CD4-positive, alpha-beta T cell (primary cell): ENCODE measurements at regions of chr6 and their contacts with region 1.

Region 1: GRCh38 chr6:26025894-26026832 is 61.1 kb upstream of the HFE start:
- DNase-seq: peak; percentile 75 to 98 (median 88)
- ATAC-seq: peak; percentile 45
- H3K4me3 ChIP-seq: peak overlapping the region; percentile 70
- H3K4me3 Mint-ChIP-seq: peak overlapping the region; percentile 90
- H3K27ac ChIP-seq: peak overlapping the region; percentile 86 to 88
- H3K27ac Mint-ChIP-seq: peak overlapping the region; percentile 97
- H3K4me1 ChIP-seq: peaks cover 34% of the 10 kb centered on the region
- H3K4me1 Mint-ChIP-seq: peaks cover 42% of the 10 kb centered on the region
- H3K27me3 ChIP-seq: no peaks in the 10 kb centered on the region
- H3K27me3 Mint-ChIP-seq: no peaks in the 10 kb centered on the region
- CTCF ChIP-seq: peak; percentile 86

Region 2: GRCh38 chr6:25962149-25963127 is 63.7 kb before region 1 on chr6 and contains the start of gene TRIM38:
- CTCF ChIA-PET with region 1: interaction called, 3 read pairs
- POLR2A ChIA-PET with region 1: interaction called, 48 read pairs
- intact Hi-C with region 1: loop called in 1 of 2 experiments (anchors 5 kb)
- DNase-seq: peak; percentile 47 to 96 (median 69)
- ATAC-seq: peak; percentile 87
- H3K4me3 ChIP-seq: peak within 1 kb of the TSS; percentile 86
- H3K4me3 Mint-ChIP-seq: peak within 1 kb of the TSS; percentile 97
- H3K27ac ChIP-seq: peak within 1 kb of the TSS; percentile 88 to 95
- H3K27ac Mint-ChIP-seq: peak within 1 kb of the TSS; percentile 97
- H3K4me1 ChIP-seq: peaks cover 76% of the 10 kb centered on the region
- H3K4me1 Mint-ChIP-seq: peaks cover 78% of the 10 kb centered on the region
- H3K27me3 ChIP-seq: no peaks in the 10 kb centered on the region
- H3K27me3 Mint-ChIP-seq: no peaks in the 10 kb centered on the region
- CTCF ChIP-seq: no peak
- total RNA-seq, gene TRIM38: 17.0 to 17.5 TPM

Region 3: DNA sequence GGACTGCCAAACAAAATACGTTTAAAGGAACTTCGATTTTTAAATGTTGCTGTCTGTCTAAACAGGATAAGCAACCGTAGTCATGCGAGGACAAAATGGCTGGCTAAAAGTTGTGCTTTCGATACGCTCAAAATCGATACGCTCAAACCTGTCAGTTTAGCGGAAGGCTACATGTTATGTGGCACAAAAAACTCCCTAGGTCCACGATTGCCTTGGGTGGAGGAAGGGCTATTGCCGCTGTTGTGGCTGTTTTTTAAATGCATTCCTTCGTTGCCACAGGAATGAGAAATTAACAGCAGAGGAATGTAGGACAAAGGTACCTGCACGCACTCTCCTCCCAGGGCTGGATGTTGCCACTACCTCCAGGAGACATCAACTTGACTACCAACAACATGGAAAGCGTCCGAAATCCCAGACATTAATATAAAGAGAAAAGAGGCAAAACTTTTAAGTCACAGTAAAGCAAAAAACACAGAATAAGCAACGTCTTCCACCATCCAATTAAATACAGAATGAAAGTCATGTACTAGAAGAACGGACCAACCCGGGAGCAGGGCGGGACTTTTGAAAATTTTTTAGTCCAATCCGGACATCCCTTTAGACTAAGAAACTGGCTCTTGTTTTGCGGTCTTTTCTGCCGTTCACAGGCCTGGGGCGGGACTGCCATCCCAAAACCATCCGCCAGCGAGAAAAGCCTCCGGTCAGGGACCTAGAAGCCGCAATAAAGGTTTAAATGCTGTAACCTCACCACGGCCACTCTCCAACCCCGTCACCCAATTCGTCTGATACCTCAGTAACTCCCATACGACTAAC is 28.9 kb after region 1 on chr6:
- CTCF ChIA-PET with region 1: interaction called, 11 read pairs
- POLR2A ChIA-PET with region 1: interaction called, 189 read pairs
- intact Hi-C with region 1: loop called (anchors 1 to 5 kb)
- DNase-seq: peak; percentile 68 to 97 (median 80)
- ATAC-seq: peak; percentile 71
- H3K4me3 ChIP-seq: peak overlapping the region; percentile 89
- H3K4me3 Mint-ChIP-seq: peak overlapping the region; percentile 97
- H3K27ac ChIP-seq: peak overlapping the region; percentile 81
- H3K27ac Mint-ChIP-seq: peak overlapping the region; percentile 96
- H3K4me1 ChIP-seq: peaks cover 29% of the 10 kb centered on the region
- H3K4me1 Mint-ChIP-seq: peaks cover 28% of the 10 kb centered on the region
- H3K27me3 ChIP-seq: no peaks in the 10 kb centered on the region
- H3K27me3 Mint-ChIP-seq: no peaks in the 10 kb centered on the region
- CTCF ChIP-seq: no peak

Region 4: GRCh38 chr6:26175428-26176181 is 149.4 kb after region 1 on chr6:
- CTCF ChIA-PET with region 1: no interaction called
- POLR2A ChIA-PET with region 1: interaction called, 15 read pairs
- intact Hi-C with region 1: no loop called
- DNase-seq: peak in 11 of 14 experiments; percentile 13 to 85 (median 54)
- ATAC-seq: no peak
- H3K4me3 ChIP-seq: no peak overlapping the region
- H3K4me3 Mint-ChIP-seq: peak overlapping the region; percentile 83
- H3K27ac ChIP-seq: peak overlapping the region in 1 of 2 donors; percentile 41
- H3K27ac Mint-ChIP-seq: peak overlapping the region; percentile 93
- H3K4me1 ChIP-seq: peaks cover 17% of the 10 kb centered on the region
- H3K4me1 Mint-ChIP-seq: peaks cover 53% of the 10 kb centered on the region
- H3K27me3 ChIP-seq: no peaks in the 10 kb centered on the region
- H3K27me3 Mint-ChIP-seq: no peaks in the 10 kb centered on the region
- CTCF ChIP-seq: peak; percentile 87

Region 5: GRCh38 chr6:26270903-26271667 is 244.9 kb after region 1 on chr6:
- CTCF ChIA-PET with region 1: interaction called, 3 read pairs
- POLR2A ChIA-PET with region 1: interaction called, 31 read pairs
- intact Hi-C with region 1: loop called in 1 of 2 experiments (anchors 5 kb)
- DNase-seq: peak; percentile 60 to 92 (median 75)
- ATAC-seq: peak; percentile 25
- H3K4me3 ChIP-seq: peak overlapping the region; percentile 59
- H3K4me3 Mint-ChIP-seq: no peak overlapping the region
- H3K27ac ChIP-seq: peak overlapping the region; percentile 82 to 84
- H3K27ac Mint-ChIP-seq: no peak overlapping the region
- H3K4me1 ChIP-seq: peaks cover 28% of the 10 kb centered on the region
- H3K4me1 Mint-ChIP-seq: peaks cover 7% of the 10 kb centered on the region
- H3K27me3 ChIP-seq: no peaks in the 10 kb centered on the region
- H3K27me3 Mint-ChIP-seq: no peaks in the 10 kb centered on the region
- CTCF ChIP-seq: no peak

Region 6: DNA sequence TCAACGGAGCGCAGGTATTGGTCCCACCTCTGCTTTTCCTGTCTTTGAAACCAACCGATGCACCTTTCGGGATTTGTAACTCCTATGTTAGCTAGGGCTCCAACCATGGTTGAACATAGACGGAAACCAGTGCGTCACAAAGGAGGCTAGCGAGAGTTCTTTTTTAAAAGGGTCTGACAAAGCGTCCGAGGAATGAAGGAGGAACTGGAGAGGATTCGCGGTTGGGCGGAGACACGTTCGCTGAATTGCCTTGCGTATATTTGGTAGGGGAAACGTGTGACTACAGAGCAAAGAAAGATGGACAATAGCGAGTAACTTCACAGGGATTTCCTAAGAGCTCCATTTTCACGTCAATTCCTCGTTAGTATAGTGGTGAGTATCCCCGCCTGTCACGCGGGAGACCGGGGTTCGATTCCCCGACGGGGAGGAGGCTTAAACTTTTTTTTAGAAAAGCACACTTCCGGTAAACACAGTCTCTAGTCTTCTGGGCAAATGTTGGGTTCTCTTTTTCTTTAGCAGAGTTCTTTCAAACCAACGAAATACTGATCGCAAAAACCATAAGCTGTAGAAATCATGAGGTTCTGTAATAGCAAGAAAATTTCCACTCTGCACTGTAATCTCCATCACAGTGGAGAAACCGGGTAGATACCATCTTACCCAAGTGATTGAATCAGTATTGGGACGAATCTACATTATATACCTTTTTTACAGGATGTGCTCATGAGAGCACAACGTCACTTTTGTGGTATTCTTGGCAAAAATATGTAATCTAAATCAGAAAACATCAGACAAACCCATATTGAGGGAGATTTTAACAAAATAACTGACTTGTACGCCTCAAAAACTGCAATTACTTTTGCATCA is 1453.4 kb after region 1 on chr6:
- CTCF ChIA-PET with region 1: no interaction called
- POLR2A ChIA-PET with region 1: interaction called, 17 read pairs
- intact Hi-C with region 1: loop called (anchors 10 kb)
- DNase-seq: peak; percentile 82 to 94 (median 90)
- ATAC-seq: peak; percentile 71
- H3K4me3 ChIP-seq: peak overlapping the region; percentile 62
- H3K4me3 Mint-ChIP-seq: no peak overlapping the region
- H3K27ac ChIP-seq: peak overlapping the region; percentile 93 to 94
- H3K27ac Mint-ChIP-seq: no peak overlapping the region
- H3K4me1 ChIP-seq: peaks cover 16% of the 10 kb centered on the region
- H3K4me1 Mint-ChIP-seq: peaks cover 3% of the 10 kb centered on the region
- H3K27me3 ChIP-seq: no peaks in the 10 kb centered on the region
- H3K27me3 Mint-ChIP-seq: no peaks in the 10 kb centered on the region
- CTCF ChIP-seq: no peak